Naive thymus-derived CD8-positive, alpha-beta T cell (primary cell): ENCODE measurements at regions of chr12 and their contacts with region 1.

Region 1: DNA sequence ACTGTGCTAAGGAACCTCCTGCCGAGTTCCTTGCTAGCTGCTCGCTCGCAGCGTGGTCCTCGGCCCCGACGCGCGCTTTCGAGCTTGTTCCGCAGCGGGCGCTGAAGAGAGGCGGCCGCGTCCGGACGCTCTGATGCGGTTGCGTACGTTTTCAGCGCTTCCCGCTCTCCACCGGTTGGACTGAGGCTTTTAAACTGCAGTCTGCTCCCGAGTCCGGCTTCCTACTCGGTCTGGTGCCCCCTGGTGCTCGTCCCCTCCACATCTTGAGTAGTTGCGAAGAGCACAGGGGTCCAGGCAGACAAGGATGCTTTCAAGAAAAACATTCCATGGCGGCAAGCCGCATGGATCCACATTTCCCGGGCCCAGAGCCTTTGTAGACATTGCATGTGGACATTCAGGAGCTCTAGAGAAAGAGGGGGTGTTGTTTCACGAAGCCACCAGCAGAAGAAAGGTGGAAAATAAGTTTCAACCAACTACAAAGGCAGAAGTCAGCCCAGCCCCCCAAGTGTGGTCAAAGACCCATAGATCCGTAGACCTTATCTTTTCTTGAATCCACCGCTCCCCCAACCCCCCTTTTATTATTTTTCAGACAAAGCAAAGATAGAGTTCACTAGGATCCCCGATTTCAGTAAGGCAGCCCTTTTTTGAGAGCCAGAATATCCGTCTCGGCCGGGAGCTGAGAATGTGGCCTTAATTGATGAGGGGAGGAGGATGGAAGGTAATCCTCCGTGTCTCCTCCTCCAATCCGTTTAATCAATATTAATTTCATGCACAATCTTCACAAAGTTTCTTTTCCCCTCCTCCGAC is 984 bp upstream of the WNK1 start:
- DNase-seq: peak; percentile 63 to 86 (median 76)
- ATAC-seq: peak; percentile 39 to 42
- H3K4me3 Mint-ChIP-seq: no peak overlapping the region
- H3K27ac Mint-ChIP-seq: no peak overlapping the region
- H3K4me1 Mint-ChIP-seq: peaks cover 12 to 33% (median 25%) of the 10 kb centered on the region in 4 donors
- H3K27me3 Mint-ChIP-seq: no peaks in the 10 kb centered on the region

Region 2: DNA sequence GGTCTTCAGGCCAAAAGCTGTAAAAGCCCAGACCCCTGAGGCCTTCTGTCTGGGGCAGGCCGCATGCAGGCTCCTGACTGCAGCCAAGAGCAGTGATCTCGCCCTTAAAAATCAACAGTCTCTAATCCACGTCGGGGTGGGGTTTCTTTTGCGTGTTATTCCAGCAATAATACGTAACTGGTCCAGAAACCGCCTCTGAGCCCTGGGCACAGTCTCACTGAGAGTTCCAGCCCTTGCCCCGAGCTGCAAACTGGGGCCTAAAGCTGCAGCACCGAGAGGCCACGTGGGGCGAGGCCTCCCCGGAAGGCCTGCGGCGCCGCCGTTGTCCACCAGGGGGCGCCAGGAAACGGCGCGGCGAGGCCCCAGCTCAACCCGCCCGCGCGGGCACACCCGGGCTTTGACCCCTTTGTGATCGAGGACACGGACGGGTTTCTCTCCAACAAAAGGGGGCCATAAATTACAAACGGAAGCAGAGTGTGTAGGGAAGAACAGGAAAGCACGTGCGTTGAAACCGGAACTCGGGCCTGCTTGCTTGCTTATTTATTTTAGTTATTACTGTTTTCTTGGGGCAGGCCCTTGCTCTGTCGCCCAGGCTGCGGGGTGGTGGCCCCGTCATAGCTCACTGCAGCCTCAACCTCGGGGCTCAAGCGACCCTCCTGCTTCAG is 175.3 kb before region 1 on chr12:
- POLR2A ChIA-PET with region 1: interaction called, 15 read pairs
- DNase-seq: peak; percentile 65 to 92 (median 84)
- ATAC-seq: peak; percentile 98 to 100
- H3K4me3 Mint-ChIP-seq: peak overlapping the region; percentile 30 to 67 (median 54)
- H3K27ac Mint-ChIP-seq: peak overlapping the region in 8 of 10 donors; percentile 51 to 92 (median 74)
- H3K4me1 Mint-ChIP-seq: peaks cover 4 to 25% (median 21%) of the 10 kb centered on the region in 4 donors
- H3K27me3 Mint-ChIP-seq: peaks cover 0 to 5% (median 0%) of the 10 kb centered on the region in 5 donors

Region 3: DNA sequence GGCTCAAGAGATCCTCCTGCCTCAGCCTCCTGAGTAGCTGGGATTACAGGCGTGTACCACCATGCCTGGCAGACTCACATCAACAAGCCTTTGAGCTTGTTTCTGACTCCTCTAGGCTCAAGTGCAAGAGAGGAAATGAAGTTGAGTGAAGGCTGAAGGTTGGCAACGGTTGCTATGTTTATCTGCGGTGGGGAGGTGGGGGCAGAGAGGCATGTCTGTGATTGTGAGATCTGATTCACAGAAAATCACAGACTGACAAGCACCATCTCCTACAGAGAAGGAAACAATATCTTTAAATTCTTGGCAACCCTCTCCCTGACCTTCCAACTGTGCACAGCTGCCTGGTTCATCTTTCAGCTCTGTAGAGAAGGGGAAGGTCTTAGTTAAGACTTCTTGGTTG is 66.0 kb before region 1 on chr12:
- POLR2A ChIA-PET with region 1: interaction called, 54 read pairs
- DNase-seq: peak; percentile 63 to 95 (median 91)
- ATAC-seq: peak; percentile 92 to 96
- H3K4me3 Mint-ChIP-seq: peak overlapping the region; percentile 25 to 84 (median 62)
- H3K27ac Mint-ChIP-seq: peak overlapping the region; percentile 92 to 100 (median 99)
- H3K4me1 Mint-ChIP-seq: peaks cover 21 to 47% (median 41%) of the 10 kb centered on the region in 4 donors
- H3K27me3 Mint-ChIP-seq: no peaks in the 10 kb centered on the region

Region 4: DNA sequence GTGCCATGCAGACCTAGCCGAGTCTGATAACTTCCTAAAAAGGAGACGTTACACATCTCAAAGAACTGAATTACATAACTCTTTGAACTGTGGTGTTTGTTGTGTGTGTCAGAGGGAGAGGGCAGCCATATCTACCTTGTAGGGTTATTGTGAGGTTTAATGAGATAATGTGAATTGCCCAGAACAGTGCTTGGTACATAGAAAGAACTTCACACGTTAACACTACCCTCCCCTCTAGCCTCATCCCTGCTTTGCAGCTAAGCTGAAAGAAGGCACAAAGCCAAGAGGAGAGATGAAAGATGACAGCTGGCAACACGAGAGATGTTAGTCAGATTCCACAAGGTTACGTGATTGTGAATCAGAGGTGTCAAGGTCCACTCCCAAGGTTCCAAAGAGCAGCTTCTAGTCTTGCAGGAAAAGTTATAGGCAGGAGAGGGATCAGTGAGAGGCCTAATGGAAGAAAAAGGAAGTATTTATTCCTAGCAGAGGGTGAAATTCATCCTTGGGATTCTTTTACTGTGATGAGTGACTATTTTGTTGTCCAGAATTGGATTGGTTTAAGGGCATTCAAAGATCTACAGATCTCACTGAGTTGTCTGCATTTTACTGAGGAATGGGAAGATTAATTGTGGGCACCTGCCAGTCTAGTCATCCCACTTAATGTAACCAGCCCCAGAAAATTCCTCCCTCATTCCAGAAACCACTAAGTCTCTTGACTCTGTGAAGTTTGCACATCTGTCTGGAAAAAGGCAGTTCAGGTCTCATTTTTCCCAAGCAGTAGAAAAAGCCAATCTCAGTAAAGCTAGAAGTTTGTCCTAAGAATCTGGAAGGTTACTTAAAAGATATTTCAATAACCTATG is 24.9 kb before region 1 on chr12:
- POLR2A ChIA-PET with region 1: interaction called, 85 read pairs
- DNase-seq: peak in 2 of 10 donors; percentile 43 to 44
- ATAC-seq: peak; percentile 43 to 71
- H3K4me3 Mint-ChIP-seq: peak overlapping the region in 6 of 10 donors; percentile 0 to 71 (median 53)
- H3K27ac Mint-ChIP-seq: peak overlapping the region; percentile 78 to 92 (median 90)
- H3K4me1 Mint-ChIP-seq: peaks cover 38 to 82% (median 78%) of the 10 kb centered on the region in 4 donors
- H3K27me3 Mint-ChIP-seq: no peaks in the 10 kb centered on the region

Region 5: GRCh38 chr12:810671-811415 is 59.4 kb after region 1 on chr12:
- POLR2A ChIA-PET with region 1: interaction called, 10 read pairs
- DNase-seq: no peak
- ATAC-seq: no peak
- H3K4me3 Mint-ChIP-seq: no peak overlapping the region
- H3K27ac Mint-ChIP-seq: peak overlapping the region in 9 of 10 donors; percentile 35 to 82 (median 75)
- H3K4me1 Mint-ChIP-seq: peaks cover 32 to 71% (median 58%) of the 10 kb centered on the region in 4 donors
- H3K27me3 Mint-ChIP-seq: no peaks in the 10 kb centered on the region

Region 6: GRCh38 chr12:851913-852312 is 100.5 kb after region 1 on chr12:
- POLR2A ChIA-PET with region 1: no interaction called
- DNase-seq: no peak
- ATAC-seq: no peak
- H3K4me3 Mint-ChIP-seq: no peak overlapping the region
- H3K27ac Mint-ChIP-seq: peak overlapping the region in 4 of 10 donors; percentile 23 to 74 (median 30)
- H3K4me1 Mint-ChIP-seq: peaks cover 16 to 51% (median 43%) of the 10 kb centered on the region in 4 donors
- H3K27me3 Mint-ChIP-seq: no peaks in the 10 kb centered on the region